ENCODE measurements at regions of chr7 and their contacts with region 1.

Region 1: DNA sequence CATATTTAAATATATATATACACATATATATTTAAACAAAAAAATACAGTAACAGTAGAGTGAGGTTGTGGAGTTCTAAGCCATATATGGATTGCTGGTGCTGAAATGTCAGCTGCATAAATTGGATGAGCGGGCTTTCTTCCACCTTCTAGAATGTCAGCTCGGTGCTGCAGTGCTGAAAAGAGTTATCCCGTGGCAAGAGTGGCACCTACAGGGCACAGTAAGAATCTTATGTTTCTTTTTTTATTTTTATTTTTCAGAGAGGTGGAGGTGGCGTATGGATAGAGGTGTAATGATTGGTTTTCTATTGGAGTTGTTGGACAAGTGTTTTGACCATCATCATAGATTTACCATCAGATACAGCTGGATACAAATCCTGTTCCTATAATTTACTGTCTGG is 86.2 kb upstream of the DYNC1I1 start:
- DNase-seq: peak; percentile 81

Region 2: DNA sequence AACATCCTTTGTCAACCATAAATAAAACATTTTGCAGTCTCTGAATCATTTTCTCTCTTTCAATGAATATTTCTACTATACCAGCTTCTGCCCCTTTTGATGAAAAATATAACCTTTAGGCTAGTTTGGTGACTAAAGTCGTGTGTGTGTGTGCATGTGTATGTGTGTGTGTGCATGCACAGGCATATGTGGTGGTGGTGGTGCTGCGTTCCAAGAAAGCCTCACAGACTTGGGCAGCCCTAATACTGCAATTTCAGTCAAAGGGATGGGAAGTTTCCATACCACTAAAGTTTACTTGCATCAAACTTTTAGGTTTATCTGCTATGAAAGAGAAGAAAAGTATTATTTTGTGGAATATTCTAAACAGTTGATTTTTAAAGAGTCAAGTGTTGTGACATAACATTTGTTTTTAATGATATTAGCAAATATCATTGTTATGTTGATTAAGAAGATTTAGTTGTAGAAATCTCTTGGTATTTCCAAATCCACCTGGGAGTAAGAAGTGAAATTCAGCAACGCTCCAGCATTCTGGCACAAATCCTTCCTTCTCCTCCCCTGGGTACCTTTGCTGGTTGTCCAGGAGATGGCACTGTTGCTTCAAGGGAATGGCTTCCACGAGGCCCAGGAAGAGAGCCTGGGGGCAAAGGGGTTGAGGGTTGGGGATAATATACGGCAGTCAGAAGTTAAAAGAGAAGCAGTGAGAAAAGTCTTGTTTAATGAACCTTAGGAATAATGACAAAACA is 158.9 kb before region 1 on chr7:
- in situ Hi-C with region 1: loop called (anchors 10 kb)
- DNase-seq: peak; percentile 76

Region 3: GRCh38 chr7:95772298-95772770 is 86.2 kb after region 1 on chr7 and contains the start of gene DYNC1I1:
- in situ Hi-C with region 1: no loop called
- DNase-seq: peak; percentile 81